IMR-90 (cell line): ENCODE measurements at regions of chrX and their contacts with region 1.

Region 1: DNA sequence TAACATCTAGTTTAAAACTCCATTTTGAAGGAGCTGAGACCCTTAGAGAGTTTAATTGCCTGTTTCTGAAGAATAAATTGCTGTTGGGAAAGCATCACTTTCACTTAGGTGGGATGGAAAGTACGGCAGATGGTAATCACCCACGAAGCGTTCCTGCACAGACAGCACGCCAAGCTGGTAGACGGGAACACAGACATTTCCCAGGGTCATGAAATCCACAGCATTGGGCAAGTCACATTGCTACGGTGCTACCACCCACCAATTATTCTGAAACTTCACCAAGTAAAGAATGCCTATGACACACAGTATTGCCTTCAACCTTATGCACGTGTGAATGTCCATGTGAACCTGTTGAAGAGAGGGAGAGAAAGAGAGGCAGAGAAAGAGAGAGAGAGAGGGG is 1004.8 kb upstream of the PRKX start:
- DNase-seq: no peak
- ATAC-seq: no peak
- H3K4me3 ChIP-seq: no peak overlapping the region
- H3K27ac ChIP-seq: no peak overlapping the region
- H3K4me1 ChIP-seq: no peaks in the 10 kb centered on the region
- H3K27me3 ChIP-seq: no peaks in the 10 kb centered on the region
- CTCF ChIP-seq: no peak
- POLR2A ChIP-seq: no peak
- RAD21 ChIP-seq: no peak

Region 2: DNA sequence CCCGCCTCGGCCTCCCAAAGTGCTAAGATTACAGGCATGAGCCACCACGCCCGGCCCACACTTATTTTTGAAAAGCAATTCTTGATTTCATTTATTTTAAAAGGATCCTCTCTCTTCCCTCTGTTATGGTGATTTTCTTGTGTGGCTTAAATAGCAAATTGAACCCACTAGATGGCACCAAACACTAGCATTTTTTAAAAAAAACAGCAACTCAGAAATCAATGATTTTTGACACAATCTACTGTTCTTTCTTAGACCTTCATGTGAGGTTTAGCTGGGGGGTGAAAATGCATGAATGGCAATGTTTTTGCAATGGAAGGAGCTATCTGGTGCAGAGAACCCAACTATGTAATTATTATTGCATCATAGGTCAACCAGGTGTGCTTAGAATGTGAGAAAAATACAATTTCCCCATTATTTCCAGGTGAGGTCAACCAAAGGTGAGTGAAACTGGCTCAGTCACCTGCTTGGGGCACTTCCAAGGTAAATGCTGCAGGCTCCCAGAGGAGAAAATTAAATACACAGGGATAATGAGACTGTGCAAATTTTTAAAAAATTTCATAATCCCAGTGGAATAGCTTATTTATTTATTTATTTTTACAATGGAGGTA is 778.1 kb before region 1 on chrX:
- CTCF ChIA-PET with region 1: no interaction called
- POLR2A ChIA-PET with region 1: no interaction called
- dilution Hi-C with region 1: no loop called
- in situ Hi-C with region 1: no loop called
- intact Hi-C with region 1: no loop called
- DNase-seq: peak; percentile 20
- ATAC-seq: peak; percentile 54; the same call in 1 of the 2 replicates
- H3K4me3 ChIP-seq: no peak overlapping the region
- H3K27ac ChIP-seq: no peak overlapping the region
- H3K4me1 ChIP-seq: no peaks in the 10 kb centered on the region
- H3K27me3 ChIP-seq: no peaks in the 10 kb centered on the region; the same call in 1 of the 2 replicates
- CTCF ChIP-seq: peak; percentile 56
- POLR2A ChIP-seq: no peak
- RAD21 ChIP-seq: peak; percentile 51

Region 3: DNA sequence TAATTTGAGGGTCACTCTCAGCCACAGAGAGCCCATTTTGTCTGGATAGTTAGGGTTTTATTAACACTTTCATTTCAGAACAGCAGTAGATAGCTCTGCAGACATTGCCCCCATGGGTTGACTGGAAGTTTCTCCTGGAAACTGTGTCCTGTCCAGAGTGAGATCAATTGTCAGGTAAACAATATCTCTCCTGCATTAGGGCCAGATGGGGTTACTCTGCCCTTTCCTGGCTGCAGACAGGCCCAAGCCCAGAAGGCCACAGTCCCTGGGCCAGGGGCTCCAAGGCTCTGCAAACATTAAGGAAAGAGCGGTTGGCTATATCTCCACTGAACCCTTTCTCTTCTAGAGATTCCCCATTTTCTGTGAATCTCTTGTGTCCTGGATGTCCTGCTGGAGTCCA is 568.0 kb before region 1 on chrX:
- CTCF ChIA-PET with region 1: no interaction called
- POLR2A ChIA-PET with region 1: no interaction called
- dilution Hi-C with region 1: no loop called
- in situ Hi-C with region 1: no loop called
- intact Hi-C with region 1: no loop called
- DNase-seq: no peak
- ATAC-seq: no peak
- H3K4me3 ChIP-seq: no peak overlapping the region
- H3K27ac ChIP-seq: no peak overlapping the region
- H3K4me1 ChIP-seq: no peaks in the 10 kb centered on the region
- H3K27me3 ChIP-seq: no peaks in the 10 kb centered on the region
- CTCF ChIP-seq: no peak
- POLR2A ChIP-seq: no peak
- RAD21 ChIP-seq: no peak

Region 4: DNA sequence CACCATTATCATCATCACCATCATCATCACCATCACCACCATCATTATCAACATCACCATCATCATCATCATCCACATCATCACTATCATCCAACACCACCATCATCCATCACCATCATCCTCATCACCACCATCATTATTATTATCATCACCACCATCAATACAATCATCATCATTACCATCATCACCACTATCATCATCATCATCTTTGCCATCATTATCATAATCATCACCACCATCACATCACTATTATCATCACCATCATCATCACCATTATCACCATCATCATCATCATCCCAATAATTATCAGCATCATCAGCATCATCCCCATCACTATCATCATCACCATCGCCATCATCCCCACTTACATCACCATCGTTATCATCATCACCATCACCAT is 17.0 kb after region 1 on chrX:
- CTCF ChIA-PET with region 1: no interaction called
- POLR2A ChIA-PET with region 1: interaction called, 21 read pairs
- dilution Hi-C with region 1: no loop called
- in situ Hi-C with region 1: no loop called
- intact Hi-C with region 1: no loop called
- DNase-seq: no peak
- ATAC-seq: no peak
- H3K4me3 ChIP-seq: no peak overlapping the region
- H3K27ac ChIP-seq: no peak overlapping the region
- H3K4me1 ChIP-seq: no peaks in the 10 kb centered on the region
- H3K27me3 ChIP-seq: no peaks in the 10 kb centered on the region
- CTCF ChIP-seq: no peak
- POLR2A ChIP-seq: no peak
- RAD21 ChIP-seq: no peak